Uterus (tissue), 4 donors: ENCODE measurements at regions of chr9 and their contacts with region 1.

Region 1: GRCh38 chr9:92133949-92134604 is 18.9 kb upstream of the SPTLC1 start:
- DNase-seq: peak; percentile 78 to 82
- H3K4me3 ChIP-seq: peak overlapping the region in 1 of 2 donors; percentile 10
- H3K27ac ChIP-seq: peak overlapping the region; percentile 74 to 81
- H3K4me1 ChIP-seq: no peaks in the 10 kb centered on the region
- H3K27me3 ChIP-seq: no peaks in the 10 kb centered on the region
- CTCF ChIP-seq: peak; percentile 78 to 94 (median 89)
- POLR2A ChIP-seq: no peak

Region 2: DNA sequence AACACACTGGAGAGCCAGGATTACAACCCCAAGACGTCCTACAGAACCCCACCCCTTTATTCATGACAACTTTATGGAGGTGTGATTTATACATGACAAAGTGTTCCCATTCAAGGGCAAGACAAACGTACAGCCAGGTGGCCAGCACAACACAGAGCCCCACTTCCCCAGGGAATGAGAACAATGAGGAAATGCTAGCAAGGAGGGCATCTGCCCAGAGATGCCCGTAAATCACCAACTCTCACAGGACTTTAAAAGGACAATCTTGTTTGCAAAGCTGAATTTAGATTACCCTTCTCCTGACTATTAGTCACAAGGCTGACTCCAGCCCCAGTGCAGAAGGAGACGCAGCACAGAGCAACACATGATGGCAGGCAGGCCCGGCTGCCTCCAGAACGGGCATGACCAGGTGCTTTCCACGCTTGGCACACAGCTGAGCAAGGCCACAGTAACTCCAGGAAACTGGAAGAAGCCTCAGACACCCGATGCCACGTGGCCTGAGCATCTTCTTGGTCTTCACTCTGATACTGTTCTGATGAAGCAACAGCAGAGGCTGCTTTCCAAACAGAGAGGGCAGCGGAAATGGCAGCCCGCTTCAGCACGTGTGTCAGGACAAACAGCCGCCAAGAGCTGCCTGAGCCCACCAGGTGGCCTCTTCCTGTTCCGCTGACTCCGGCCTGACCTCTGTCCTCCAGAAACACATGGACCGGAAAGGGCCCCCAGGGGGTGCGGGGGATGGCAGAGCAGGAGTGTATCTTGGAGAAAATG is 235.4 kb before region 1 on chr9:
- intact Hi-C with region 1: no loop called
- DNase-seq: peak; percentile 54 to 67
- H3K4me3 ChIP-seq: no peak overlapping the region
- H3K27ac ChIP-seq: peak overlapping the region; percentile 80 to 89
- H3K4me1 ChIP-seq: peaks cover 27 to 45% of the 10 kb centered on the region in 2 donors
- H3K27me3 ChIP-seq: no peaks in the 10 kb centered on the region
- CTCF ChIP-seq: no peak
- POLR2A ChIP-seq: peak in 1 of 2 donors; percentile 23

Region 3: DNA sequence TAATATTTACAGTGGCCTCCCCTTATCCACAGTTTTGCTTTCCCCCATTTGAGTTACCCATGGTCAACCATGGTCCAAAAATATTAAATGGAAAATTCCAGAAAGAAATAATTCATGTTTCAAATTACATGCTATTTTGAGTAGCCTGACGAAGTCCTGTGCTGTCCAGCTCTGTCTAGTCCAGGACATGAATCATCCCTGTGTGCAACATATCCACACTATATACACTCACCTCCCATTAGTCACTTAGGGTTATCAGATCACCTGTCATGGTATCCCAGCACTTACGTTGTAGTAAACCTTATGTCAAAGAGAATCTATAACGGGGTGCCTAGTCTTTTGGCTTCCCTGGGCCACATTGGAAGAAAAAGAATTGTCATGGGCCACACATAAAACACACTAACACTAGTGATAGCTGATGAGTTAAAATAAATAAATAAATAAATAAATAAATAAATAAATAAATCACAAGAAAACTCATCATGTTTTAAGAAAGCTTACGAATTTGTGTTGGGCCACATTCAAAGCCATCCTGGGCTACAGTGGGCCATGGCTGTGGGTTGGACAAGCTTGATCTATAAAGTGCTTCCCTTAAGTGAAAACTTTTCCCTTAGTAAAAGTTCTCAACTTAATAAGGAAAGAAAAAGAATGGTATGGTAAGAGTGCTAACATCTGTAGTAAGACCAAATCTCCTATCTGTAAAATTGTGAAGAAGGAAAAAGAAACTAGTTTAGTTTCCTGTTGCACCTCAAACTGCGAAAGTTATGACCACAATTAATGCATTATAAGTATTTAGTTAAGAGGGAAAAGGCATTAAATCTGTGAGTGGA is 306.1 kb after region 1 on chr9:
- intact Hi-C with region 1: loop called (anchors 10 kb)
- DNase-seq: no peak
- H3K4me3 ChIP-seq: no peak overlapping the region
- H3K27ac ChIP-seq: no peak overlapping the region
- H3K4me1 ChIP-seq: no peaks in the 10 kb centered on the region
- H3K27me3 ChIP-seq: no peaks in the 10 kb centered on the region
- CTCF ChIP-seq: no peak
- POLR2A ChIP-seq: no peak

Region 4: GRCh38 chr9:92634712-92635605 is 500.9 kb after region 1 on chr9:
- intact Hi-C with region 1: loop called (anchors 5 kb)
- DNase-seq: peak; percentile 86 to 88
- H3K4me3 ChIP-seq: no peak overlapping the region
- H3K27ac ChIP-seq: peak overlapping the region; percentile 62 to 76
- H3K4me1 ChIP-seq: no peaks in the 10 kb centered on the region
- H3K27me3 ChIP-seq: no peaks in the 10 kb centered on the region
- CTCF ChIP-seq: peak; percentile 92 to 98 (median 98)
- POLR2A ChIP-seq: no peak